ENCODE measurements at regions of chr1 and their contacts with region 1.

Region 1: DNA sequence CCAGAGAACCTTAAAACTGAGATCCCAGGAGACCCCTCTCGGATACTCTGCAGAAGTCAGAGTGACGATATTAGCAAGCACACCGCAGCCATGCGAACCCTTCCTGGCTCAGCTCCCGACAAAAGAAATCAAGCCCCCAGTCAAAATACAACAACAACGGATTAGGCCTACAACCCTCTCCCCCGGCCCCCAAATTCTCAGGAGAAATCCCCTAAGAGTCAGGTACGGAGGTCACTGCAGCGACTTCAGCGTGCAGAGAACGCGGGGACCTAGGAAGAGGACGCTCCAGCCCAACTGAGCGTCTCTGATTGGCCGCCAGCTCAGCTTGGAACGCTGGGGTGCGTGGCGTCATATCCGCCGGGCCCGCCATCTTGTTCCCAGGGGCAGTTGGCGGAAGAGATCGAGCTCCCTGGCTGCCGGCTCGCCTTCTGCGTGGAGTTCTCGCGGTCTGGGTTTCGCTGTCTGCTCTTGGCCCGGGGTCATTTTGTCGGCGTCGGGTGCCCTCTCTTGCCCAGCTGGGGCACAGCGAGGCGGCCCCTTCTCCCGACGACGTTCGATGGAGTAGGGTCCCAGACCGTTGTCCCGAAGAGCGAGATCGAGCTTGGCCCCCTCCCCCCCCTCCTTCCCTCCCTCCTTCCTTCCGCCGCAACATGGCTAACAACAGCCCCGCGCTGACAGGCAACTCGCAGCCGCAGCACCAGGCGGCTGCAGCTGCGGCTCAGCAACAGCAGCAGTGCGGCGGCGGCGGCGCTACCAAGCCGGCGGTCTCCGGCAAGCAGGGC is at the start of gene PRPF38B:
- DNase-seq: peak; percentile 96
- H3K4me3 Mint-ChIP-seq: peak within 1 kb of the TSS; percentile 91
- H3K27ac Mint-ChIP-seq: peak within 1 kb of the TSS; percentile 96
- H3K4me1 Mint-ChIP-seq: peaks cover 43% of the 10 kb centered on the region
- H3K27me3 Mint-ChIP-seq: no peaks in the 10 kb centered on the region
- total RNA-seq, gene PRPF38B: 68.5 to 70.5 TPM

Region 2: GRCh38 chr1:108590957-108591356 is 101.2 kb before region 1 on chr1:
- CTCF ChIA-PET with region 1: no interaction called
- POLR2A ChIA-PET with region 1: interaction called, 12 read pairs
- DNase-seq: no peak
- H3K4me3 Mint-ChIP-seq: no peak overlapping the region
- H3K27ac Mint-ChIP-seq: no peak overlapping the region
- H3K4me1 Mint-ChIP-seq: peaks cover 39% of the 10 kb centered on the region
- H3K27me3 Mint-ChIP-seq: no peaks in the 10 kb centered on the region

Region 3: GRCh38 chr1:108670131-108670773 is 21.9 kb before region 1 on chr1:
- CTCF ChIA-PET with region 1: no interaction called
- POLR2A ChIA-PET with region 1: interaction called, 182 read pairs
- DNase-seq: no peak
- H3K4me3 Mint-ChIP-seq: no peak overlapping the region
- H3K27ac Mint-ChIP-seq: no peak overlapping the region
- H3K4me1 Mint-ChIP-seq: peaks cover 15% of the 10 kb centered on the region
- H3K27me3 Mint-ChIP-seq: peaks cover 11% of the 10 kb centered on the region

Region 4: GRCh38 chr1:108746372-108747205 is 54.5 kb after region 1 on chr1 and contains the start of gene STXBP3:
- CTCF ChIA-PET with region 1: interaction called, 4 read pairs
- POLR2A ChIA-PET with region 1: interaction called, 57 read pairs
- DNase-seq: peak; percentile 100
- H3K4me3 Mint-ChIP-seq: peak within 1 kb of the TSS; percentile 93
- H3K27ac Mint-ChIP-seq: peak within 1 kb of the TSS; percentile 95
- H3K4me1 Mint-ChIP-seq: peaks cover 31% of the 10 kb centered on the region
- H3K27me3 Mint-ChIP-seq: no peaks in the 10 kb centered on the region
- total RNA-seq, gene STXBP3: 55.9 to 60.8 TPM

Region 5: GRCh38 chr1:108963052-108963686 is 271.0 kb after region 1 on chr1 and contains the start of gene CLCC1:
- CTCF ChIA-PET with region 1: interaction called, 3 read pairs
- POLR2A ChIA-PET with region 1: interaction called, 20 read pairs
- DNase-seq: peak; percentile 96
- H3K4me3 Mint-ChIP-seq: peak within 1 kb of the TSS; percentile 82
- H3K27ac Mint-ChIP-seq: peak within 1 kb of the TSS; percentile 93
- H3K4me1 Mint-ChIP-seq: peaks cover 42% of the 10 kb centered on the region
- H3K27me3 Mint-ChIP-seq: no peaks in the 10 kb centered on the region
- total RNA-seq, gene CLCC1: 16.4 to 20.1 TPM